OCI-LY7 (cell line): ENCODE measurements at regions of chr3 and their contacts with region 1.

Region 1: GRCh38 chr3:13012228-13012691 is 61.0 kb downstream of the IQSEC1 start:
- DNase-seq: peak; percentile 77
- H3K4me3 ChIP-seq: peak overlapping the region; percentile 6
- H3K27ac ChIP-seq: peak overlapping the region; percentile 97
- H3K4me1 ChIP-seq: peaks cover 99% of the 10 kb centered on the region
- CTCF ChIP-seq: no peak

Region 2: DNA sequence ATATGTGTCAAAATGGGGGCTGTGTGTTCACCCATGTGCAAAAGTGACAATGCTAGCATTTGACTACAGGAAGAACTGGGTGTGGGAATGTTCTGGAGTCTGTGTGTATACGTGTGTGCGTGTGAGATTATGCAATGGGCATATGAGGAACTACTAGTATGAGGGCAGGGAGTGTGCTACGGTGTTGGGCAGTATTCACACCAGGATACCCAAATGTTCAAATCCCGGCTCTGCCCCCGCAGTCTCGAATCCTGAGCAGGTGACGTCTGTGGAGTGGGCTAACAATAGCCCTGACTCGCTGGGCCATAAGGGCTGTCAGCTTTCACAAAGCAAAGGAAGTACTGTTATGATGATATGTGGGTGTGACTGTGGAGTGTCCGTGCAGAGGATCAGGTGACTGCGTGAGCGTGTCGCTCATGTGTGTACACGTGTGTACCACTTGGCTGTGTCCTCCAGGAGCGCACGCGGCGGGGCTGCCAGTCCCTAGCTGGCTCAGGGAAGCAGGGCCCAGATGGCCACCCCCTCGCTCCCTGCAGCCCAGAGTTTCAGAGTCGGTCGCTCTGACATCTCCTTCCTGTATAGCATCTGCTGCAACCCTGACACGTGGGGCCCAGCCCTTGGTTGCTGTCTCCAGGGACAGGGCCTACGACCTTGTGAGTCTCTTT is 33.8 kb after region 1 on chr3:
- CTCF ChIA-PET with region 1: interaction called, 3 read pairs
- POLR2A ChIA-PET with region 1: interaction called, 19 read pairs
- intact Hi-C with region 1: loop called (anchors 1 kb)
- DNase-seq: peak; percentile 91
- H3K4me3 ChIP-seq: peak overlapping the region; percentile 43
- H3K27ac ChIP-seq: peak overlapping the region; percentile 94
- H3K4me1 ChIP-seq: peaks cover 79% of the 10 kb centered on the region
- CTCF ChIP-seq: no peak

Region 3: DNA sequence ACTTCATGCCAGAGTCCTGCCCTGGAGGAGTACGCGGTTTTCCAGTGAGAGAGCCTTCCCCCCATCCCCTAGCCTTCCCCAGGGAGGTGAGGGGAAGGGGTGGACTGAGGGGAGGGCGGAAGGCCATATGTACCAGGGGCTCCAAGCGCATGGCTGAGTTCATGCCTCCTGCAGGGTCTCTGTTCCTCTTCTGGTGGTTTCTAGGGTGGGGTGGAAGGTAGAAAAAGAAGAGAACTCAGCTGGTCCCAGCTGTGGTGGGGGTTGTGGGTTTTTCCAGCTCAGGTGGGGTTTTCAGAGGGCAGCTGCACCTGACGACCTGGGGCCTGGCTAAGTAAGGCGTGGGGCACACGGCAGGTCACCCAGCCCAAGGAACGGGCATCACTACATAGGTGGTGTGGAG is 71.6 kb after region 1 on chr3:
- CTCF ChIA-PET with region 1: no interaction called
- POLR2A ChIA-PET with region 1: interaction called, 5 read pairs
- intact Hi-C with region 1: loop called (anchors 1 kb)
- DNase-seq: peak; percentile 88
- H3K4me3 ChIP-seq: peak overlapping the region; percentile 21
- H3K27ac ChIP-seq: peak overlapping the region; percentile 87
- H3K4me1 ChIP-seq: peaks cover 91% of the 10 kb centered on the region
- CTCF ChIP-seq: no peak

Region 4: GRCh38 chr3:13419505-13420044 is 407.3 kb after region 1 on chr3:
- CTCF ChIA-PET with region 1: no interaction called
- POLR2A ChIA-PET with region 1: interaction called, 8 read pairs
- intact Hi-C with region 1: loop called (anchors 2 kb)
- DNase-seq: peak; percentile 72
- H3K4me3 ChIP-seq: peak overlapping the region; percentile 98
- H3K27ac ChIP-seq: peak overlapping the region; percentile 91
- H3K4me1 ChIP-seq: peaks cover 69% of the 10 kb centered on the region
- CTCF ChIP-seq: peak; percentile 40

Region 5: GRCh38 chr3:14047841-14048240 is 1035.6 kb after region 1 on chr3:
- CTCF ChIA-PET with region 1: no interaction called
- POLR2A ChIA-PET with region 1: no interaction called
- intact Hi-C with region 1: no loop called
- DNase-seq: no peak
- H3K4me3 ChIP-seq: no peak overlapping the region
- H3K27ac ChIP-seq: no peak overlapping the region
- H3K4me1 ChIP-seq: no peaks in the 10 kb centered on the region
- CTCF ChIP-seq: no peak